Left cardiac atrium (tissue), 4 donors: ENCODE measurements at regions of chrX and their contacts with region 1.

Region 1: GRCh38 chrX:30504309-30504708 is 73.3 kb downstream of the TASL start:
- DNase-seq: no peak
- ATAC-seq: no peak

Region 2: DNA sequence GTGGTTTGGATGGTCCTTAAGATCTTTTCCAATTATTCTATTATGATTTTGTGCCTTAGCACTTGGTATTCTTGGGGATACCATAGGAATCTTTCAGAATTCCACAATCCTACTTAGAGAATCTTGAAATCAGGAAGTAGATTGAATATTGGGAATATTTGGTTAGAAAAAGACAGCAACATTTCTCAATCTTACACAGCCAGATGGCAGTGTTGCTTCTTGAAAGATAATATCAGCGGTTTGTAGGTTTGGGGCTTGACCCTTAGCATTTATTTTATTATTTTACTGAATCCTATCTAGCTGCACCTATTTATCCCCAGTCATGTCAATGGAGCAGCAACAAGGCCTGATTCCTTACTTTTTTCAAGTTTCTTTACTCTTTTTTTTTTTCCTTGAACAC is 228.8 kb before region 1 on chrX:
- intact Hi-C with region 1: loop called (anchors 10 kb)
- DNase-seq: no peak
- ATAC-seq: no peak

Region 3: GRCh38 chrX:31293409-31293808 is 789.1 kb after region 1 on chrX:
- intact Hi-C with region 1: no loop called
- DNase-seq: no peak
- ATAC-seq: no peak